MCF 10A (cell line): ENCODE measurements at regions of chr4 and their contacts with region 1.

Region 1: GRCh38 chr4:151530783-151531182 is 121.8 kb downstream of the FHIP1A start:
- DNase-seq: peak; percentile 37
- H3K4me3 Mint-ChIP-seq: no peak overlapping the region
- H3K27ac Mint-ChIP-seq: no peak overlapping the region
- H3K4me1 Mint-ChIP-seq: peaks cover 13% of the 10 kb centered on the region
- H3K27me3 Mint-ChIP-seq: no peaks in the 10 kb centered on the region
- CTCF ChIP-seq: peak; percentile 43

Region 2: GRCh38 chr4:151604238-151604637 is 73.5 kb after region 1 on chr4:
- CTCF ChIA-PET with region 1: interaction called, 4 read pairs
- POLR2A ChIA-PET with region 1: no interaction called
- intact Hi-C with region 1: loop called (anchors 2 kb)
- DNase-seq: peak; percentile 29
- H3K4me3 Mint-ChIP-seq: no peak overlapping the region
- H3K27ac Mint-ChIP-seq: no peak overlapping the region
- H3K4me1 Mint-ChIP-seq: no peaks in the 10 kb centered on the region
- H3K27me3 Mint-ChIP-seq: no peaks in the 10 kb centered on the region
- CTCF ChIP-seq: peak; percentile 58

Region 3: DNA sequence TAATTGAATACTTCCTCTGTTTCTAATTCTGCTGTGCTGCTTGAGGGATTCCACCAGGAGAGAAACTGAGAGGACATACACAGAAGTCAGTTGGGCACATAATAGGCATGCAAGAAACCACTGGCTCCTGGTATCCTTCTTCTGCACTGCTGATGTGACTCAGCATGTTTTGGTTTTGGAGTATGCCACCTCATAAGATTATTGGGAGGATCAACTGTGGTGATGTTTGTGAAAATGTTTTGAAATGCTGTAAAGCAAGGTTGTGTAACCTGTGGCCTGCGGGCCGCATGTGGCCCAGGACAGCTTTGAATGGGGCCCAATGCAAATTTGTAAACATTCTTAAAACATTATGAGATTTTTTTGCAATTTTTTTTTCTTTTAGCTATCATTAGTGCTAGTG is 110.4 kb after region 1 on chr4:
- CTCF ChIA-PET with region 1: no interaction called
- POLR2A ChIA-PET with region 1: no interaction called
- intact Hi-C with region 1: loop called (anchors 1 kb)
- DNase-seq: peak; percentile 93
- H3K4me3 Mint-ChIP-seq: no peak overlapping the region
- H3K27ac Mint-ChIP-seq: peak overlapping the region; percentile 88
- H3K4me1 Mint-ChIP-seq: peaks cover 20% of the 10 kb centered on the region
- H3K27me3 Mint-ChIP-seq: no peaks in the 10 kb centered on the region
- CTCF ChIP-seq: no peak

Region 4: GRCh38 chr4:152369902-152370295 is 839.1 kb after region 1 on chr4:
- CTCF ChIA-PET with region 1: no interaction called
- POLR2A ChIA-PET with region 1: no interaction called
- intact Hi-C with region 1: loop called (anchors 10 kb)
- DNase-seq: no peak
- H3K4me3 Mint-ChIP-seq: no peak overlapping the region
- H3K27ac Mint-ChIP-seq: no peak overlapping the region
- H3K4me1 Mint-ChIP-seq: peaks cover 5% of the 10 kb centered on the region
- H3K27me3 Mint-ChIP-seq: no peaks in the 10 kb centered on the region
- CTCF ChIP-seq: peak; percentile 15